ENCODE measurements at regions of chr17 and their contacts with region 1.

Region 1: GRCh38 chr17:50372758-50373556 is at the starts of genes EME1 and MRPL27:
- DNase-seq: peak; percentile 93
- ATAC-seq: peak; percentile 92
- total RNA-seq, gene EME1: 0.60 TPM
- total RNA-seq, gene MRPL27: 85.0 TPM

Region 2: GRCh38 chr17:50397111-50397918 is 24.4 kb after region 1 on chr17 and contains the start of gene LRRC59:
- intact Hi-C with region 1: loop called (anchors 2 kb)
- DNase-seq: peak; percentile 97
- ATAC-seq: peak; percentile 98
- total RNA-seq, gene LRRC59: 24.5 TPM